Ovary (tissue), 10 donors: ENCODE measurements at regions of chr12 and their contacts with region 1.

Region 1: GRCh38 chr12:59164991-59165718 is 244.9 kb upstream of the LRIG3 start:
- DNase-seq: no peak
- H3K4me3 ChIP-seq: no peak overlapping the region
- H3K27ac ChIP-seq: no peak overlapping the region
- H3K4me1 ChIP-seq: no peaks in the 10 kb centered on the region
- H3K27me3 ChIP-seq: no peaks in the 10 kb centered on the region
- CTCF ChIP-seq: no peak
- EP300 ChIP-seq: no peak
- POLR2A ChIP-seq: no peak

Region 2: GRCh38 chr12:57983146-57983857 is 1181.9 kb before region 1 on chr12:
- intact Hi-C with region 1: loop called in 1 of 4 experiments (anchors 10 kb)
- DNase-seq: peak in 2 of 5 donors; percentile 17 to 27
- H3K4me3 ChIP-seq: no peak overlapping the region
- H3K27ac ChIP-seq: no peak overlapping the region
- H3K4me1 ChIP-seq: no peaks in the 10 kb centered on the region
- H3K27me3 ChIP-seq: no peaks in the 10 kb centered on the region
- CTCF ChIP-seq: peak in 2 of 3 donors; percentile 27
- EP300 ChIP-seq: no peak
- POLR2A ChIP-seq: no peak

Region 3: GRCh38 chr12:58346032-58346632 is 819.0 kb before region 1 on chr12:
- intact Hi-C with region 1: loop called in 1 of 4 experiments (anchors 10 kb)
- DNase-seq: no peak
- H3K4me3 ChIP-seq: no peak overlapping the region
- H3K27ac ChIP-seq: no peak overlapping the region
- H3K4me1 ChIP-seq: no peaks in the 10 kb centered on the region
- H3K27me3 ChIP-seq: no peaks in the 10 kb centered on the region
- CTCF ChIP-seq: peak; percentile 48 to 70 (median 63)
- EP300 ChIP-seq: no peak
- POLR2A ChIP-seq: no peak

Region 4: DNA sequence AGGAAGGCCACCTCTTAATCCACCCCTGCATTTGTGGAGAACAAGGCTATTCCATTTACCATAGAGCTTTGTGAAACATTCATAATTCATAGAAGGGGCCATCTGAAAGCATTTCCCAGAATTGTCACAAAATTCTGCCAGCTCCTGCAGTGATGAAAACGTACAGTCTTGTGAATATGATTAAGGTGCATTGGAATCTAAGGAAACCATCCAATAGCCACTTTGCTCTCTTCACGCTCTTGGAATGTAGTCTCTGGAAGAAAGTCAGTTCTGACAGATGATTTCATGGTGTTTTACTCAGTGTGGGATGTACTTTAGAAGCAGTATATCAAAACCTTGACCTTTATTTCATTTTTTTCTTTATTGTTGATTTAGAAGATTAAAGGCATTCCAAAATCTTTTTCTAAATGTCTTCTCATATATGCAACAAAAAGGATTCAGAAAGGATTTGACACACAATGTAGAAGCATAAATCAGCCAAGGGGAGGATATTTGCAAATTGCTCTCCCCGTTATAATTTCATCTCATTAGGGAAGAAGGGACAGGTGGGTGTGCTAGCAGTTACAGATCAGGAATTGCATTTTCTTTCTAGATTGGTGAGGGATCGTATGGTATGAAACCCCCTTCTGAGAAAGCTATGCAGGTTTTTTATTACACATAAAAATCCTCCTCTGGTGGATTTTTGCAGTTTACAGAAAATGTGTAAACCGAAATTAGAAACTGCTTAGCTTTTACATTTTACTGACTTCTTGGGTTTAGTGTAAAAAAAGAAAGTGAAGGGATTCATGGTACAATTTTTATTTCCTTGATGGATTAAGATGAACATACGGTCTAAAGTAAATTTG is 635.0 kb before region 1 on chr12:
- intact Hi-C with region 1: loop called in 1 of 4 experiments (anchors 10 kb)
- DNase-seq: no peak
- H3K4me3 ChIP-seq: no peak overlapping the region
- H3K27ac ChIP-seq: no peak overlapping the region
- H3K4me1 ChIP-seq: no peaks in the 10 kb centered on the region
- H3K27me3 ChIP-seq: no peaks in the 10 kb centered on the region
- CTCF ChIP-seq: no peak
- EP300 ChIP-seq: no peak
- POLR2A ChIP-seq: no peak